Activated CD4-positive, alpha-beta memory T cell treated with anti-CD3 and anti-CD28 coated beads for 36 hours (primary cell): ENCODE measurements at regions of chr19 and their contacts with region 1.

Region 1: GRCh38 chr19:48255376-48256303 is at the start of gene CARD8:
- DNase-seq: peak; percentile 86
- H3K4me3 Mint-ChIP-seq: peak within 1 kb of the TSS; percentile 91
- H3K27ac Mint-ChIP-seq: peak within 1 kb of the TSS; percentile 98
- H3K4me1 Mint-ChIP-seq: peaks cover 62% of the 10 kb centered on the region
- H3K27me3 Mint-ChIP-seq: no peaks in the 10 kb centered on the region
- total RNA-seq, gene CARD8: 152 TPM

Region 2: DNA sequence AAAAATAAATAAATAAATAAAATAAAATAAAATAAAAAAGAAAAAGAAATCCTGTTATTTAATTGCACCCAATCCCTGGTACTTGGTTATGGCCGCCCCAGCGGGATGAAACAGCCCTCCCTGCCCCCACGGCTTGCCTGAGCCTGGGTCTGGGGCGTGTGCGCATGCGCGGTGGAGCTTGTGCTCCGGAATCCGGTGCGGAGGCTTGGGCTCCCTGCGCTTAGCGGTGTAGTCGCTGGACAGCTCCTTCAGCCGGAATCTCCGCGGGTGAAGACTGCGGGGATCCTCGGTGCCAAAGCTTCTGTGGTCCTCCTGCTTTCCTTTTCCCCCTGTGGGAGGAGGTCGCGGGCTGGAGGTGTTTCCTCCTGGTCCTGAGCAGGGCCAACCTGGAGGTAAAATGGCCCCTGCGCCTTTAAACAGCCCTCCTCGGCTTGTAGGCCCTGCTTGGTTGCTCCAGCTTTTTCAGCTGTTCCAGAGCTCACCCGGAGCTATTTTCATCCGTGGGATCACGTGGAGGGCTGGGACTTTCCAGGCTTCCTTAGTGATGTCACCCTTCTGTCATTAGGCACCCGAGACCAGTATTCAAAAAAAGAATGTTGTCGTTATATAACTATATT is 145.2 kb before region 1 on chr19 and contains the start of gene PLA2G4C:
- CTCF ChIA-PET with region 1: interaction called, 15 read pairs
- POLR2A ChIA-PET with region 1: interaction called, 3 read pairs
- intact Hi-C with region 1: loop called (anchors 1 kb)
- DNase-seq: peak; percentile 89
- H3K4me3 Mint-ChIP-seq: peak within 1 kb of the TSS; percentile 82
- H3K27ac Mint-ChIP-seq: peak within 1 kb of the TSS; percentile 91
- H3K4me1 Mint-ChIP-seq: peaks cover 14% of the 10 kb centered on the region
- H3K27me3 Mint-ChIP-seq: no peaks in the 10 kb centered on the region
- total RNA-seq, gene PLA2G4C: 12.4 to 13.3 TPM

Region 3: DNA sequence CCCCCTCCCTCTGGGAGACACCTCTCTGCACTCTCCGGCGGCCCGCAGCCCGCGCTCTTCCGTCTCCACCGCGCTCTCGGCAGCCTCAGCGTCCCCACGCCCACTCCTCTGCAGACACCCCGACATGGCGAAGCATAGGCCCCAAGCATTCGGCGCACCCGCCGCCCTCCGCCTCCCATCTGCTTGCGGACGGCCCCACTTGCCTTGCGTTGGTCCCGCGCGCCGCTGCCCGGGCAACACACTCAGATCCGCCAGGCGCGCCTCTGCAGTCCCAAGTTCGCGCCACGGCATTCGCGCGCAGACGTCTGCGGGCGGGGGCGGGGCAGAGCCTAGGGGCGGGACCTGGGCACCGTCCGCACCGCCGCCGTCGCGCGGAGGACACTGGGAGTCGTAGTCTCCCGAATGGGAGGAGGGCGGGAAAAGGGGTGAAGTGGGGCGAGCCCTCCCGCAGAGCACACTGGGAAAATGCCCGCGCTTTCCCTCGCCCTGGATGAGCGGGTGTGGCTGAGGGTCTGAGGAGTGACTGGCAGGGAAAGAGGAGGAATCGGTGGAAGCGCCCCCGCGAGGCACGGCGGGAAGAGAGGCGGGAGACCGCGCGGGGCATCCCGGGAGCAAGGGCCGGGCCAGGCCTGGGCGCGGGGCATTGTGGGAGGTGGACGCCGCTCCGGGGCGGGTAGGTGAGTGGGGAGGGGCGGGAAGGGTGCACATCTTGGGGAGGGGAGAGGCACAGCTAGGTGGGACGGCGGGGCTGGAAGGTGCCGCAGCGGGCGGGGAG is 85.4 kb before region 1 on chr19 and contains the starts of genes LIG1 and ZSWIM9:
- CTCF ChIA-PET with region 1: interaction called, 10 read pairs
- POLR2A ChIA-PET with region 1: no interaction called
- intact Hi-C with region 1: loop called (anchors 2 kb)
- DNase-seq: peak; percentile 94
- H3K4me3 Mint-ChIP-seq: peak within 1 kb of the TSS; percentile 95
- H3K27ac Mint-ChIP-seq: peak within 1 kb of the TSS; percentile 97
- H3K4me1 Mint-ChIP-seq: peaks cover 39% of the 10 kb centered on the region
- H3K27me3 Mint-ChIP-seq: no peaks in the 10 kb centered on the region
- total RNA-seq, gene LIG1: 174 TPM
- total RNA-seq, gene ZSWIM9: 7.4 to 8.0 TPM

Region 4: GRCh38 chr19:48190288-48190884 is 65.3 kb before region 1 on chr19:
- CTCF ChIA-PET with region 1: interaction called, 10 read pairs
- POLR2A ChIA-PET with region 1: no interaction called
- intact Hi-C with region 1: no loop called
- DNase-seq: peak; percentile 73
- H3K4me3 Mint-ChIP-seq: no peak overlapping the region
- H3K27ac Mint-ChIP-seq: no peak overlapping the region
- H3K4me1 Mint-ChIP-seq: peaks cover 2% of the 10 kb centered on the region
- H3K27me3 Mint-ChIP-seq: no peaks in the 10 kb centered on the region

Region 5: GRCh38 chr19:48203732-48204628 is 51.7 kb before region 1 on chr19:
- CTCF ChIA-PET with region 1: interaction called, 44 read pairs
- POLR2A ChIA-PET with region 1: interaction called, 9 read pairs
- intact Hi-C with region 1: loop called (anchors 2 kb)
- DNase-seq: peak; percentile 97
- H3K4me3 Mint-ChIP-seq: no peak overlapping the region
- H3K27ac Mint-ChIP-seq: no peak overlapping the region
- H3K4me1 Mint-ChIP-seq: peaks cover 17% of the 10 kb centered on the region
- H3K27me3 Mint-ChIP-seq: no peaks in the 10 kb centered on the region

Region 6: GRCh38 chr19:48244281-48244680 is 11.4 kb before region 1 on chr19:
- CTCF ChIA-PET with region 1: interaction called, 19 read pairs
- POLR2A ChIA-PET with region 1: interaction called, 13 read pairs
- intact Hi-C with region 1: loop called (anchors 1 kb)
- DNase-seq: peak; percentile 56
- H3K4me3 Mint-ChIP-seq: peak overlapping the region; percentile 69
- H3K27ac Mint-ChIP-seq: peak overlapping the region; percentile 93
- H3K4me1 Mint-ChIP-seq: peaks cover 56% of the 10 kb centered on the region
- H3K27me3 Mint-ChIP-seq: no peaks in the 10 kb centered on the region

Region 7: DNA sequence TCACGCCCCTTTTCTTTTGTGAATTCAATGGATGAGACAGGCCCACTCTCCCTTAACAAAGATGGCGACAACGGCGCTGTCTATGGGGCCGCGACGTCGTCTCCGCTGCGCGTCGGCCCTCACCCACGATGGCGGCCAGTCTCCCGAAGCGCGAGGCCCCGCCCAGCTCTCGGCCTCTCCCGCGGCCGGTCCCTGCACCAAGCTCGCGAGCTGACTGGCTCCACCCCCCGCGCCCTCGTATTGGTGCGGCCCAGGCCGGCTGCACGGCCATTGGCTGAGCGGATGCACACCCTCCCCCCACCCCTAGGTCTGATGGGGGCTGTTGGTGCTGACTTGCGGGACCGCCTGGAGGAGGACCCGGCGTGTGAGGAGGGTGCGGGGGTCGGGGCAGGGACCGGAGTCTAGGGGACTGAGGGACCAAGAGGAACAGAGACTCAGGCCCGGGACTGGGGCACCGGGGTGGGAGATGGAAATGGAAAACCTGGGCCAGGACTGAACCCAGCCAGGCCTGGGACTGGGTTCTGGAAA is 368.5 kb after region 1 on chr19:
- CTCF ChIA-PET with region 1: no interaction called
- POLR2A ChIA-PET with region 1: no interaction called
- intact Hi-C with region 1: loop called (anchors 1 kb)
- DNase-seq: peak; percentile 98
- H3K4me3 Mint-ChIP-seq: peak overlapping the region; percentile 75
- H3K27ac Mint-ChIP-seq: peak overlapping the region; percentile 89
- H3K4me1 Mint-ChIP-seq: peaks cover 51% of the 10 kb centered on the region
- H3K27me3 Mint-ChIP-seq: no peaks in the 10 kb centered on the region